ENCODE measurements at regions of chr12 and their contacts with region 1.

Region 1: GRCh38 chr12:51871126-51871525 is 16.8 kb upstream of the ANKRD33 start:
- DNase-seq: no peak
- H3K4me3 Mint-ChIP-seq: no peak overlapping the region
- H3K27ac Mint-ChIP-seq: no peak overlapping the region
- H3K4me1 Mint-ChIP-seq: peaks cover 12% of the 10 kb centered on the region
- H3K27me3 Mint-ChIP-seq: peaks cover 55% of the 10 kb centered on the region

Region 2: DNA sequence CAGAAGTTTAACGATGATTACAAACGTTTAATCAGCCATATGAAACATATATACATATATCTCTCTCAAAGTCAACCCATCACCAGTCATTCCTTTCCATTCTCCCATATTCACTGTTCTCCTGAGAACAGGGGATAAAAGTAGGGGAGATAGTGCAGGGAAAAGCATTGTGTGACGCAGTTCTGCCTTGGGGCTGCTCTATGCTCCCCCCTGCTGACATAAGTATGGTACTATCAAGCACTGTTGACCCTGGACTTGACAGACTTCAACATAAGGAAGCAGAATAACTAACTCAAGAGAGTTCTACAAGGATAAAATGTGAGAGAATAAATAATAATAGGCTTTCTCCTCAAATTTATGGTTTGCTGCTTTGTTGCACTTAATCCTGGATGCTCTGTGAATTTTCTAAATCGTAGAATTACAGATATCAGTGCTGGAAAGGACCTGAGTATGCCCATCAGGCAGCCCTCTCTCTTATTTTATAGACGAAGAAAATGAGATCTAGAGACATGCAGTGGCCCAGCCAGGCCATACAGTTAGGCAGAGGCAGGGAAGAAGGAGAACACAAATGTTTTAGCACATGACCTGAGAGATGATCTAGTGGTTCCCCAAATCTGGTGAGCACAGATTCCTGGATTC is 192.9 kb before region 1 on chr12:
- intact Hi-C with region 1: loop called (anchors 10 kb)
- DNase-seq: no peak
- H3K4me3 Mint-ChIP-seq: no peak overlapping the region
- H3K27ac Mint-ChIP-seq: no peak overlapping the region
- H3K4me1 Mint-ChIP-seq: no peaks in the 10 kb centered on the region
- H3K27me3 Mint-ChIP-seq: peaks cover 10% of the 10 kb centered on the region

Region 3: DNA sequence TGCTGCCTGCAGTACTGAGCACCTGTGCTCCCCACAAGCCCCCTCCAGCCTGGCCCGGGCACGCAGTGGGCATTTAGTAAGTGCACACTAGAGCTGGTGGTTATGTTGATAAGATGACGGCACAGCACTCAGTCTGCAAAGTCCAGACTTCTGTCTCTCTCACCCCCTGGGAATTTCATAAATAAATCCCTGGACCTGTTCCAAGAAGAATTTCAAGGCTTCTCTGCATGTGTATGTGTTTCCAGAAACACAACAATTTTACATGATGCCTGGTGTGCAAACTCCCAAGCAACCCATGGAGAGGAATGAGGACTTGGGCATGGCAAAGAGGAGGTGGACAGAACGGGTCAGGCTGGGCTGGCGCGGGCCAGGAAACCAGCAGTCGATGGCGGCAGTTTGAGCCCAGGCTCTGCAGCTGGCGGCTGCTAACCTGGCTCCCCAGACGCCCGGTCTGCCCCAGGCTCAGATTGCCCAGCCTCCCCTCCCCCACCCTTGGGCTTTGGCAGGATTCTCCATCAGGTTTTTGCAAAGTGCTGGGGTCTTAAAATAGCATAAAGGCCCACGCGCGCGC is 70.0 kb after region 1 on chr12:
- intact Hi-C with region 1: no loop called
- DNase-seq: no peak
- H3K4me3 Mint-ChIP-seq: no peak overlapping the region
- H3K27ac Mint-ChIP-seq: no peak overlapping the region
- H3K4me1 Mint-ChIP-seq: no peaks in the 10 kb centered on the region
- H3K27me3 Mint-ChIP-seq: peaks cover 21% of the 10 kb centered on the region